Mammary epithelial cell (primary cell): ENCODE measurements at regions of chr13 and their contacts with region 1.

Region 1: DNA sequence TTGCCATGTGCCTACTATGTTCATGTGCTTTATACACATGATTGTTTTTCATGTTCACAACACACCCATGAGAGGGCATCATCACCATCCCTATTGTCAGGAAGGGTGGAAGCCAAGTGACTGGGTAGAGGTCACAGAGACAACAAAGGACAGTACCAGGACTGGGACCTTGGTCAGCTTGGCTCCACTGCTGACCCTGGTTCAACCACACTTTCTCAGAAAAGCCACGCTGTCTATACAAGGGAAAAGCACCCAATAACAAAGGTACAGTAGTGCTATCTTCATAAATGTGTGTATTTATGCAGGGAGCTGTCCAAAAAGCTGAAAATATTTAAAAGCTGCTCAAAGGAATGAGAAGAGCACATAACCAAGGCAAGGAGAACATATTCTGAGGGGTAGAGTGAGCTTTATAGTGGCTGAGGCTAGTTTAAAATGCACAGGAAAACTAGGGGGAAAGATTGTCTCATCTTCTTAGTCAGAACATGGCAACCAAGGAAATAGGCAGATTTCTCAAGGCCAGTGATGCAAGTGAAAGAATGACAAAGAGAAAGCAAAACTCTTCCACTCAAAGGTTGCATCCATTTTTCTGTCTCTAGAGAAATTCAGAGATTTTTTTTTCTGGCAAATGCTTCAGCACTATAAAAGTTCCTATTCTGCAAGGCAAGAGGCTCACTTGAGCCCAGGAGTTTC is 415.0 kb downstream of the FOXO1 start:
- DNase-seq: peak; percentile 60
- H3K4me3 ChIP-seq: no peak overlapping the region
- H3K27ac ChIP-seq: no peak overlapping the region
- H3K4me1 ChIP-seq: peaks cover 19% of the 10 kb centered on the region
- H3K27me3 ChIP-seq: no peaks in the 10 kb centered on the region
- CTCF ChIP-seq: no peak

Region 2: GRCh38 chr13:40271931-40272775 is 20.7 kb after region 1 on chr13:
- CTCF ChIA-PET with region 1: no interaction called
- dilution Hi-C with region 1: no loop called
- in situ Hi-C with region 1: no loop called
- intact Hi-C with region 1: loop called (anchors 2 kb)
- DNase-seq: peak; percentile 81
- H3K4me3 ChIP-seq: no peak overlapping the region
- H3K27ac ChIP-seq: peak overlapping the region; percentile 38
- H3K4me1 ChIP-seq: peaks cover 21% of the 10 kb centered on the region
- H3K27me3 ChIP-seq: no peaks in the 10 kb centered on the region
- CTCF ChIP-seq: no peak

Region 3: GRCh38 chr13:40283666-40284065 is 32.2 kb after region 1 on chr13:
- CTCF ChIA-PET with region 1: no interaction called
- dilution Hi-C with region 1: no loop called
- in situ Hi-C with region 1: no loop called
- intact Hi-C with region 1: no loop called
- DNase-seq: peak; percentile 68
- H3K4me3 ChIP-seq: no peak overlapping the region
- H3K27ac ChIP-seq: no peak overlapping the region
- H3K4me1 ChIP-seq: peaks cover 16% of the 10 kb centered on the region
- H3K27me3 ChIP-seq: no peaks in the 10 kb centered on the region
- CTCF ChIP-seq: no peak